ENCODE measurements at regions of chr7 and their contacts with region 1.

Region 1: GRCh38 chr7:25093268-25093826 is 31.7 kb downstream of the CYCS start:
- DNase-seq: no peak
- H3K4me3 ChIP-seq: no peak overlapping the region
- H3K27me3 ChIP-seq: no peaks in the 10 kb centered on the region
- CTCF ChIP-seq: peak; percentile 95

Region 2: DNA sequence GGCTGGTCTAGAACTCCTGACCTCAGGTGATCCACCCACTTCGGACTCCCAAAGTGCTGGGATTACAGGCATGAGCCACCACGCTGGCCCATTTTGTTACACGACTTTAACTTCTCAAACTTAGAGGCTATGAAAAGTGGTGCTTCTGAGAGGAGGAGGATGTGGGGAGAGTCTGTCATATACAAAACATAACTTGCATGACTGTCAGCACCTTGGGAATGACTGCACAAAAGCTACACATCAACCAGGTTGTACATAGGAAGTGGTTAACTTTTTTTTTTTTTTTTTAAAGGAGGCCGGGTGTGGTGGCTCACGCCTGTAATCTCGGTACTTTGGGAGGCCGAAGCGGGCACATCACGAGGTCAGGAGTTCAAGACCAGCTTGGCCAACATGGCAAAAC is 292.7 kb before region 1 on chr7:
- CTCF ChIA-PET with region 1: interaction called, 355 read pairs
- POLR2A ChIA-PET with region 1: no interaction called
- DNase-seq: no peak
- H3K4me3 ChIP-seq: no peak overlapping the region
- H3K27me3 ChIP-seq: no peaks in the 10 kb centered on the region
- CTCF ChIP-seq: no peak

Region 3: GRCh38 chr7:24819916-24820689 is 273.2 kb before region 1 on chr7:
- CTCF ChIA-PET with region 1: interaction called, 355 read pairs
- POLR2A ChIA-PET with region 1: interaction called, 3 read pairs
- DNase-seq: peak; percentile 34
- H3K4me3 ChIP-seq: no peak overlapping the region
- H3K27me3 ChIP-seq: no peaks in the 10 kb centered on the region
- CTCF ChIP-seq: peak; percentile 90

Region 4: DNA sequence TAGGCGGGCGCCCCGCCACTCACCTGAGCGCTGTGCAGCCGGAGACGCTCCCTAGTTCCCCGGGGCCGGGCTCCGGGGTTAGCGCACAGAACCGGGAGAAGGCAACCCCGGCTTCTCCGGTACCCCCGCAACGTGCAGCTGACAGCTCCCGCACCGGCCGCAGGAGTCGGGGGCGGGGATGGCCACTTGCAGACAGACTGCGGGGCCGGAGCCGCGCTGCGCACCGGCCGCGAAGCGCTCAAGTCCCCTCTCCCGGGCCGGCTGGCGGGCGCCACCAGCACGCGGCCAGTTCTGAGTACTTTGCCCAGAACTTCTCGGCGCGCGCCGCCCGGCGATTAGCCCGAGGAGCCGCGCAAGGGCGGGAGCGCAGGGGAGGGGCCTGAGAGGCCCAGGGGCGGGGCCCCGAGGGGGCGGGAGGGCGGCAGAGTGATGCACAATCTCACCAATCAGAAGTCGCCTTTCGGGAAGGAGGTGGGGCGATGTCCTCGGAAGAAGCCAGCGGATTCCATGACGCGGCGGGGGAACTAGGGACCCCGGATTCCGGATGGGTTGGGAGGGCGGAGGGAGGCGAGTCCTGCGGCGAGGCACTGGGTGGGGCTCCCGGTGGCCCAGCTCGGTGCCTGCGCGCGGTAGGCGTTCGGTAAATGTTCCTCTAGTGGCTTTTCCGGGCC is 113.3 kb before region 1 on chr7 and contains the start of gene OSBPL3:
- CTCF ChIA-PET with region 1: interaction called, 106 read pairs
- POLR2A ChIA-PET with region 1: no interaction called
- DNase-seq: peak; percentile 71
- H3K4me3 ChIP-seq: peak within 1 kb of the TSS; percentile 60
- H3K27me3 ChIP-seq: no peaks in the 10 kb centered on the region
- CTCF ChIP-seq: no peak
- polyA plus RNA-seq, gene OSBPL3: 26.5 and 27.1 TPM in 2 replicates

Region 5: GRCh38 chr7:25083201-25083600 is 10.1 kb before region 1 on chr7:
- CTCF ChIA-PET with region 1: interaction called, 23 read pairs
- POLR2A ChIA-PET with region 1: no interaction called
- DNase-seq: no peak
- H3K4me3 ChIP-seq: no peak overlapping the region
- H3K27me3 ChIP-seq: no peaks in the 10 kb centered on the region
- CTCF ChIP-seq: no peak

Measured in BJ (cell line).